ENCODE measurements at regions of chr20 and their contacts with region 1.

Region 1: GRCh38 chr20:10434832-10435812 is at the start of gene SLX4IP:
- DNase-seq: peak; percentile 65
- ATAC-seq: peak; percentile 70
- H3K4me3 Mint-ChIP-seq: peak within 1 kb of the TSS; percentile 96
- H3K27ac Mint-ChIP-seq: peak within 1 kb of the TSS; percentile 98
- H3K4me1 Mint-ChIP-seq: peaks cover 34% of the 10 kb centered on the region
- H3K27me3 Mint-ChIP-seq: no peaks in the 10 kb centered on the region
- CTCF ChIP-seq: no peak
- total RNA-seq, gene SLX4IP: 7.4 and 8.6 TPM in 2 replicates

Region 2: GRCh38 chr20:10060226-10060625 is 374.9 kb before region 1 on chr20:
- CTCF ChIA-PET with region 1: no interaction called
- POLR2A ChIA-PET with region 1: no interaction called
- intact Hi-C with region 1: loop called (anchors 10 kb)
- DNase-seq: no peak
- ATAC-seq: peak; percentile 100
- H3K4me3 Mint-ChIP-seq: peak overlapping the region; percentile 6
- H3K27ac Mint-ChIP-seq: no peak overlapping the region
- H3K4me1 Mint-ChIP-seq: peaks cover 17% of the 10 kb centered on the region
- H3K27me3 Mint-ChIP-seq: peaks cover 38% of the 10 kb centered on the region
- CTCF ChIP-seq: no peak

Region 3: DNA sequence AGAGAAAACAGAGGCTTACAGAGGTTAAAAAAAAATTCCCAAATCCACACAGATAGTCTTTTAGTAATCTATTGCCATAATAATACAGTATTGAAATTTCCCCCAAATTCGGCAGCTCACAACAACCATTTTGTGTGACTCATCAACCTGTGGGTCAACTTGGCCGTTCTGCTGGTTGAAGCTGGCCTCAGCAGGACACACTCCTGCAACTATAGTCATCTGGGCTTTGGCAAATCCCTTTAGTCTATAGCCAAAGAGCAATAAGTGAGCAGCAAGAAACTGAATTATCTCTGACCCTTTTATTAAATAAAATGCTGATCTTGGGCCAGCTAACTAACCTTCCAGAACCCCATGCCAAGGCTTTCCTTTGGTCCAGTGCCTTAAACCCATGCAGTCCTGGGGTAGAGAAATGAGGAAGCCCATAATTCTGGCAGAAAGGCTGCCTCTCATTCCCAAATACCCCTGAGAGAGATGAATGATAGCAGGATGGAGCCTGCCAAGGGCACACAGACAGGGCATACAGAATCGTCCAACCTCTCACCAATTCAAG is 233.7 kb before region 1 on chr20:
- CTCF ChIA-PET with region 1: no interaction called
- POLR2A ChIA-PET with region 1: no interaction called
- intact Hi-C with region 1: no loop called
- DNase-seq: no peak
- ATAC-seq: no peak
- H3K4me3 Mint-ChIP-seq: no peak overlapping the region
- H3K27ac Mint-ChIP-seq: no peak overlapping the region
- H3K4me1 Mint-ChIP-seq: no peaks in the 10 kb centered on the region
- H3K27me3 Mint-ChIP-seq: no peaks in the 10 kb centered on the region
- CTCF ChIP-seq: no peak

Region 4: DNA sequence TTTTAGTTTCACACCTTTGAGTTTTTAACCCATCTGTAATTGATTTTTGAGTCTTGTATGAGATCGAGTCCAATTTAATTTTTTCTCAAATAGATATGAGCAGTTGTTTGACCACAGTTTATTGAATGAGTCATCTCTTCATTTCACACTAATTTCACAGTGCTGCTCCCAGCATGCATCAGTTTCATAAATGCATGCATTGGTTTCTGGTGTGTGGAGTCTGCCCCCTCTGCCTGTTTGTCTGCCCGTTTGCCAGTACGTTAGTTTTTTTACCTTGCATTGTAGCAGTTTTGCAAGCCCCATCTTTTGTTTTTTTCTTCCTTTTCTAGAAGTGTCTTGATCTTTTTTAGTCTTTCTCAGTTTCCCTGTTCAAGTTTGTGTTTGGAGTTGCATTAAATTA is 11.9 kb after region 1 on chr20:
- CTCF ChIA-PET with region 1: no interaction called
- POLR2A ChIA-PET with region 1: interaction called, 8 read pairs
- intact Hi-C with region 1: loop called (anchors 1 kb)
- DNase-seq: no peak
- ATAC-seq: peak; percentile 99
- H3K4me3 Mint-ChIP-seq: peak overlapping the region; percentile 72
- H3K27ac Mint-ChIP-seq: peak overlapping the region; percentile 38
- H3K4me1 Mint-ChIP-seq: peaks cover 19% of the 10 kb centered on the region
- H3K27me3 Mint-ChIP-seq: no peaks in the 10 kb centered on the region
- CTCF ChIP-seq: no peak

Region 5: DNA sequence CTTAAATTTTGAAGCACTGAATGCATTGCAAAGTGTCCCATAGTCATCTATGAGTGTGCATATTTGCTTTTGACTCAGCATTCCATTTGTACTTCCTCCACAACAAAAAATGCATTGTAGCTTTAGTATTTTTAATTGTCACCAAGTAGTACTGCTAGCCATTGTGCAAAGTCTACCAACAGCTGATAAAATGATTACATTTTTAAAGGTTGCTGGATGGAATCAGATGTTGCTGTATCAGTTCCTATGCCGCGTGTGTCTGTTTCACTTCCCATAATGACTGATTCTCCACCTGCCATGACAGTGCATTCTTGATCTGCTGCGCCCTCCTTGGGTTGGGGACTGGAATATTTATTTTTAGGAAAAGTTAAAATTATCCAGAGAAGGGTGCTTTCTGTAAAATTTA is 41.2 kb after region 1 on chr20:
- CTCF ChIA-PET with region 1: interaction called, 10 read pairs
- POLR2A ChIA-PET with region 1: interaction called, 16 read pairs
- intact Hi-C with region 1: loop called (anchors 1 kb)
- DNase-seq: no peak
- ATAC-seq: peak; percentile 77
- H3K4me3 Mint-ChIP-seq: peak overlapping the region; percentile 41
- H3K27ac Mint-ChIP-seq: peak overlapping the region; percentile 67
- H3K4me1 Mint-ChIP-seq: peaks cover 38% of the 10 kb centered on the region
- H3K27me3 Mint-ChIP-seq: no peaks in the 10 kb centered on the region
- CTCF ChIP-seq: no peak